OCI-LY7 (cell line): ENCODE measurements at regions of chr18 and their contacts with region 1.

Region 1: GRCh38 chr18:32714571-32715148 is 58.2 kb downstream of the KLHL14 start:
- DNase-seq: peak; percentile 75
- H3K4me3 ChIP-seq: no peak overlapping the region
- H3K27ac ChIP-seq: no peak overlapping the region
- H3K4me1 ChIP-seq: peaks cover 9% of the 10 kb centered on the region
- CTCF ChIP-seq: peak; percentile 85

Region 2: DNA sequence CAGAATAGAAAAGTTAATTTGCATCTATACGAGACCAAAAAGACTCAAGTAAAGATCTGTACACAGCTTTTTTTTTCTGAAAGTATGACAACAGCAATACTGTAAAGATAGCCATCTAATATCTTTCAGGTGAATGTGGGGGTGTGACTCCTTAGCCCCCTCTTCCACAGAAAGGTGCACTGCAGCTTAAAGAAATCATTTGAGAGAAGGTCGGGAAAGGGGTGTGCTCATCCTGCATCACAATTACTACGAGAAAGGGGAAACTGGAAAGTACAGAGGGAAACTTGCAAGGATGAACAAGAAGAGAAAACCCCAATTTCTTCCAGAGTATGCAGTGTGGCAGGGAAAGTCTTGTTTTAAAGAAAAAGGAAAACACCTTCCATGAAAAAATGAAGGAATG is 470.3 kb after region 1 on chr18:
- CTCF ChIA-PET with region 1: no interaction called
- POLR2A ChIA-PET with region 1: no interaction called
- intact Hi-C with region 1: loop called (anchors 5 kb)
- DNase-seq: no peak
- H3K4me3 ChIP-seq: no peak overlapping the region
- H3K27ac ChIP-seq: no peak overlapping the region
- H3K4me1 ChIP-seq: no peaks in the 10 kb centered on the region
- CTCF ChIP-seq: peak; percentile 25; the same call in 1 of the 2 replicates